ENCODE measurements at regions of chr9 and their contacts with region 1.

Region 1: GRCh38 chr9:77456829-77457437 is 191.2 kb downstream of the GNA14 start:
- DNase-seq: peak; percentile 76
- H3K4me3 ChIP-seq: no peak overlapping the region
- H3K27ac ChIP-seq: peak overlapping the region in 1 of 2 experiments; percentile 1; a peak in 2 of 4 replicates
- H3K4me1 ChIP-seq: peaks cover 9 to 18% of the 10 kb centered on the region in 2 experiments; a peak in 2 of 4 replicates
- H3K27me3 ChIP-seq: no peaks in the 10 kb centered on the region
- CTCF ChIP-seq: peak; percentile 88
- EP300 ChIP-seq: no peak
- RAD21 ChIP-seq: peak; percentile 74

Region 2: DNA sequence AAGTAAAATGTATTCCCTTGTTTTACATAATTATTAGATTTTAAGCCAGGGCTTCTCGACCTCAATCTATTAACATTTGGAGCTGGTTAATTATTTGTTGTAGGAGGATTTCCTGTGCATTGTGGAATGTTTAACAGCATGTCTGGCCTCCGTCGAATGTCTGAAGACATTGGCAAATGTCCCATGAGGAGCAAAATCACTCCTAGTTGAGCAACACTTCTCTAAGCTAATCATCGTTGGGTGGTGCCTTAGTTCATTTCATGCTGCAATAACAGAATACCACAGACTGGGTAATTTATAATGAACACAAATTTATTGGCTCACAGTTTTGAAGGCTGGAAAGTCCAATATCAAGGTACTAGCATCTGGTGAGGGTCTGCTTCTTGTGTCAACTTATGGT is 293.0 kb before region 1 on chr9:
- CTCF ChIA-PET with region 1: interaction called, 13 read pairs
- POLR2A ChIA-PET with region 1: no interaction called
- DNase-seq: no peak
- H3K4me3 ChIP-seq: no peak overlapping the region
- H3K27ac ChIP-seq: no peak overlapping the region
- H3K4me1 ChIP-seq: no peaks in the 10 kb centered on the region; a peak in 1 of 4 replicates
- H3K27me3 ChIP-seq: no peaks in the 10 kb centered on the region
- CTCF ChIP-seq: no peak
- EP300 ChIP-seq: no peak
- RAD21 ChIP-seq: no peak

Region 3: GRCh38 chr9:77440057-77440456 is 16.9 kb before region 1 on chr9:
- CTCF ChIA-PET with region 1: interaction called, 147 read pairs
- POLR2A ChIA-PET with region 1: no interaction called
- DNase-seq: peak; percentile 81
- H3K4me3 ChIP-seq: peak overlapping the region in 1 of 2 experiments; percentile 25; a peak in 1 of 4 replicates
- H3K27ac ChIP-seq: peak overlapping the region in 1 of 2 experiments; percentile 77; a peak in 2 of 4 replicates
- H3K4me1 ChIP-seq: peaks cover 19 to 25% of the 10 kb centered on the region in 2 experiments; a peak in 2 of 4 replicates
- H3K27me3 ChIP-seq: no peaks in the 10 kb centered on the region
- CTCF ChIP-seq: no peak
- EP300 ChIP-seq: no peak; a peak in 1 of 4 replicates
- RAD21 ChIP-seq: no peak

Region 4: GRCh38 chr9:77488439-77489126 is 31.6 kb after region 1 on chr9:
- CTCF ChIA-PET with region 1: interaction called, 14 read pairs
- POLR2A ChIA-PET with region 1: no interaction called
- DNase-seq: peak; percentile 21
- H3K4me3 ChIP-seq: no peak overlapping the region
- H3K27ac ChIP-seq: no peak overlapping the region
- H3K4me1 ChIP-seq: no peaks in the 10 kb centered on the region
- H3K27me3 ChIP-seq: no peaks in the 10 kb centered on the region
- CTCF ChIP-seq: peak; percentile 59
- EP300 ChIP-seq: no peak
- RAD21 ChIP-seq: peak; percentile 55

Region 5: GRCh38 chr9:77616191-77616590 is 159.3 kb after region 1 on chr9:
- CTCF ChIA-PET with region 1: interaction called, 10 read pairs
- POLR2A ChIA-PET with region 1: no interaction called
- DNase-seq: no peak
- H3K4me3 ChIP-seq: no peak overlapping the region
- H3K27ac ChIP-seq: no peak overlapping the region
- H3K4me1 ChIP-seq: no peaks in the 10 kb centered on the region
- H3K27me3 ChIP-seq: no peaks in the 10 kb centered on the region
- CTCF ChIP-seq: no peak
- EP300 ChIP-seq: no peak
- RAD21 ChIP-seq: no peak

Region 6: DNA sequence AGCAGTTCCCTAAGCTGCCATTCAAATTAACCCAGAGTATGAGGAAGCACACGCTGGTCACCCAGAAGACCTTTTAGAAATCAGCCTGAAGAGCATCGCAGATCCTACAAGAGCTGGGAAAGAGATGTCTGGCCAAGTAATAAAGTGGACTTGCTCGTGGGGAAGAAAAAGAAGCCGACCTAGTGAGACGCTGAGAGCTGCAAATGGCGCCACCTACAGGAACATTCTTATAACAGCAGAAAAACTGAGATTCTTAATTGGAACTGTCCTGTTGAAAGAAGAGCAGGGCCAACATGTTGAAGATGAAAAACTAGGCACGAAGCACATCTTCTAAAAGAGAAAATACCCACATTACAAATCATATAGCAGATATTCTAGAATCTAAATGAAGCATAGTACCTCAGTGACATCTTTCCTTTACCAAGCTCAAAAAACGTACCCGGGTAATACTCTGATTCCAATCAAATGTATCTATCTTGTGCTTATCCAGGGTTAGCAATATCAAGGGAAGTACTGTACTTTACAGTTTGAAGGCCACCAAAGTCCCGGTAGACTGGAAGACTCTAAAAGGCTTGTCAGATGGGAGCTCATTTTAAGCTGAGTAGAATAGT is 578.6 kb after region 1 on chr9:
- CTCF ChIA-PET with region 1: interaction called, 18 read pairs
- POLR2A ChIA-PET with region 1: no interaction called
- DNase-seq: peak; percentile 65
- H3K4me3 ChIP-seq: peak overlapping the region in 1 of 2 experiments; percentile 14; a peak in 1 of 4 replicates
- H3K27ac ChIP-seq: peak overlapping the region in 1 of 2 experiments; percentile 36; a peak in 3 of 4 replicates
- H3K4me1 ChIP-seq: peaks cover 0 to 9% of the 10 kb centered on the region in 2 experiments; a peak in 3 of 4 replicates
- H3K27me3 ChIP-seq: no peaks in the 10 kb centered on the region
- CTCF ChIP-seq: peak; percentile 85
- EP300 ChIP-seq: no peak
- RAD21 ChIP-seq: peak; percentile 92

Measured in SK-N-SH (cell line).